Activated naive CD4-positive, alpha-beta T cell treated with anti-CD3 and anti-CD28 coated beads for 36 hours (primary cell): ENCODE measurements at regions of chr2 and their contacts with region 1.

Region 1: DNA sequence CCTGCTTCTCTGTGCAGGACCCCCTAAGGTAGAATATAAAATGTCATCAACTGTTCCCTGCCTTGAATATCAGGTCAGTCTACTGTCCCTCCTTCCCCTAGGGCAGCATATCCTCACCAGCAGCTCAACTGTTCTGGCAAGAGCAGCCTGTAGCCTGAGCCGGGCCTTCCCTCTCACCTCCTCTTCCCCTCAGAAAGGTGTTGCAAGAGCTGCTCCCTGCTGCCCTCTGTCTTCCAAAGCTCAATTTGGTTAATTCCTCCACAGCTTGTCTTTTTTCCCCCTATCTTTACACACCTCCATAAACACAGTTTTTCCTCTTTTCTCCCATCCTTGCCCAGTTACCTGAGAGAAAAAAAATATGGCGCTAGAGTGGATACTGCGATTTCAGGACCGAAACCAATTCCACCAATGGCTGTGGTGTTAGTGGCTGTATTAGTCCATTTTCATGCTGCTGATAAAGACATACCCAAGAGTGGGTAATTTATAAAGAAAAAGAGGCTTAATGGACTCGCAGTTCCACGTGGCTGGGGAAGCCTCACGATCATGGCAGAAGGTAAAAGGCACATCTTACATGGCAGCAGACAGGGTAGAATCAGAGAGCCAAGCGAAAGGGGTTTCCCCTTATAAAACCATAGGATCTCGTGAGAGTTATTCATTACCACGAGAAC is 184.7 kb downstream of the MREG start:
- DNase-seq: peak; percentile 74
- H3K4me3 Mint-ChIP-seq: no peak overlapping the region
- H3K27ac Mint-ChIP-seq: no peak overlapping the region
- H3K4me1 Mint-ChIP-seq: peaks cover 12% of the 10 kb centered on the region
- H3K27me3 Mint-ChIP-seq: no peaks in the 10 kb centered on the region

Region 2: GRCh38 chr2:215454519-215455246 is 374.0 kb before region 1 on chr2:
- CTCF ChIA-PET with region 1: interaction called, 5 read pairs
- intact Hi-C with region 1: loop called (anchors 1 kb)
- DNase-seq: no peak
- H3K4me3 Mint-ChIP-seq: no peak overlapping the region
- H3K27ac Mint-ChIP-seq: no peak overlapping the region
- H3K4me1 Mint-ChIP-seq: no peaks in the 10 kb centered on the region
- H3K27me3 Mint-ChIP-seq: peaks cover 8% of the 10 kb centered on the region

Region 3: GRCh38 chr2:215553946-215554345 is 274.7 kb before region 1 on chr2:
- CTCF ChIA-PET with region 1: no interaction called
- intact Hi-C with region 1: loop called (anchors 10 kb)
- DNase-seq: peak; percentile 19
- H3K4me3 Mint-ChIP-seq: no peak overlapping the region
- H3K27ac Mint-ChIP-seq: no peak overlapping the region
- H3K4me1 Mint-ChIP-seq: no peaks in the 10 kb centered on the region
- H3K27me3 Mint-ChIP-seq: no peaks in the 10 kb centered on the region